ENCODE measurements at regions of chr11 and their contacts with region 1.

Region 1: DNA sequence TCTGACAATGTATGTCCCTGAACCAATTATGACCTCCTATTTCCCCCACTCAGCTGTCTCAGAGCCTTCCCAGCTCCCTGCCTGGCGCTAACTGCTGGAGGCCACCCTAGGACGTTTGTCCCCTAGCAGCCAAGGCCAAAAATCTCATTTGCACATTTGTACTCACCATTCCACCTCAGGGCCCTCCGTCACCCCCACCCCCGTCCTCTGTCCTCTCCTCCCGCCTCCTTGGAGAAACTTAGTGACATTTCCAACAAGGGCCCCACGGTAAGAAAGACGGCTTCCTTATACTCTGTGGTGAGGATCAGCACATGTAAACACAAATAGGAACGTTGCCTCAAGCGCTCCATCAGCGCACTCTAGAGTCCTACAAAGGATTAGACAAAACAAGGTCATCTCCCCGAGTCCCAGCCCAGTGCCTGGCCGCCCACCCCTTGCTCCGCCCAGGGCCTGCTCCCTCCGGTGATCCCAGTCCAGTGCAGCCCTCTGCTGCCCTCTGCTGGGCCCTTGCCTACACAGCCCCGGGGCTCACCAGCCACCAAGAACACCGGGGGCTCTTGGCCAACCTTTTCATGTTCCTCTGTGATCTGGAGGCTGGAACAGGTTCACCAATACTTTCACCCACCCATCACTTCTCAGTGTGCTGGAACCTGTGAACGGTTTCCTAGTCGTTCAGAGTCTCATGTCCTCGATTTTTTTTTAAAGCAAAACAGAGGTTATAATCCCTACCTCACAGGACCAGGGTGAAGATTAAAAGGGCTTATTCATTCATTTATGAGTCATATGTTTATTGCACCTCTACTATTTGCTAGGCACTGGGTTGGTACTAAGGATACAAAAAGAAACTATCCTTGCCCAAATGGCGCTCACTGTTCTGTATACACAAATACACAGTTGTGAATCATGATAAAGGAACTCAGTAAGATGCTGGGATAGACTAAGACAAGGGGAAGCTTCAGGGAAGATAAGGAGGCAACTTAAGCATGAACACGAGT is 15.3 kb upstream of the CTR9 start:
- DNase-seq: peak; percentile 96
- H3K4me3 ChIP-seq: peak overlapping the region; percentile 13
- H3K27ac ChIP-seq: peak overlapping the region; percentile 77
- H3K4me1 ChIP-seq: peaks cover 22% of the 10 kb centered on the region
- H3K27me3 ChIP-seq: no peaks in the 10 kb centered on the region
- CTCF ChIP-seq: peak; percentile 98

Region 2: GRCh38 chr11:9861860-9862725 is 873.7 kb before region 1 on chr11:
- CTCF ChIA-PET with region 1: no interaction called
- POLR2A ChIA-PET with region 1: no interaction called
- intact Hi-C with region 1: loop called (anchors 5 kb)
- DNase-seq: peak; percentile 81
- H3K4me3 ChIP-seq: no peak overlapping the region
- H3K27ac ChIP-seq: peak overlapping the region; percentile 49
- H3K4me1 ChIP-seq: peaks cover 49% of the 10 kb centered on the region
- H3K27me3 ChIP-seq: no peaks in the 10 kb centered on the region
- CTCF ChIP-seq: peak; percentile 86

Region 3: DNA sequence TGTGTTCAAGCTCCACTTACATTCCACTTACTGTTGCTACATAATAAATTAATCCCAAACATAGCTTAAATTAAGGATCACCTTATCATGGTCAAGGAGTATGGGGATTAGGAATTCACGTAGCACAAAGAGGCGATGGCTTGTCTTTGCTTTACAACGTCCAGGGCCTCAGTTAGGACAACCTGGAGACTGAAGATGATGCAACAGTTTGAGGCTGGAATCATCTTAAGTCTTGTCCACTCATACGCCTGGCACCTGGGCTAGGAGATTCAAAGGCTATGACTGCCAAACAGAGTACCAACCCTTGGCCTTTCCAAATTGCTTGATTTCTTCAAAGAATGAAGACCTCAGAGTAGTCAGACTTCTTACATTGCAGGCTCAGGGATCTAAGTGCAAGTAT is 590.8 kb before region 1 on chr11:
- CTCF ChIA-PET with region 1: no interaction called
- POLR2A ChIA-PET with region 1: no interaction called
- intact Hi-C with region 1: no loop called
- DNase-seq: no peak
- H3K4me3 ChIP-seq: no peak overlapping the region
- H3K27ac ChIP-seq: no peak overlapping the region
- H3K4me1 ChIP-seq: peaks cover 5% of the 10 kb centered on the region
- H3K27me3 ChIP-seq: no peaks in the 10 kb centered on the region
- CTCF ChIP-seq: no peak

Region 4: DNA sequence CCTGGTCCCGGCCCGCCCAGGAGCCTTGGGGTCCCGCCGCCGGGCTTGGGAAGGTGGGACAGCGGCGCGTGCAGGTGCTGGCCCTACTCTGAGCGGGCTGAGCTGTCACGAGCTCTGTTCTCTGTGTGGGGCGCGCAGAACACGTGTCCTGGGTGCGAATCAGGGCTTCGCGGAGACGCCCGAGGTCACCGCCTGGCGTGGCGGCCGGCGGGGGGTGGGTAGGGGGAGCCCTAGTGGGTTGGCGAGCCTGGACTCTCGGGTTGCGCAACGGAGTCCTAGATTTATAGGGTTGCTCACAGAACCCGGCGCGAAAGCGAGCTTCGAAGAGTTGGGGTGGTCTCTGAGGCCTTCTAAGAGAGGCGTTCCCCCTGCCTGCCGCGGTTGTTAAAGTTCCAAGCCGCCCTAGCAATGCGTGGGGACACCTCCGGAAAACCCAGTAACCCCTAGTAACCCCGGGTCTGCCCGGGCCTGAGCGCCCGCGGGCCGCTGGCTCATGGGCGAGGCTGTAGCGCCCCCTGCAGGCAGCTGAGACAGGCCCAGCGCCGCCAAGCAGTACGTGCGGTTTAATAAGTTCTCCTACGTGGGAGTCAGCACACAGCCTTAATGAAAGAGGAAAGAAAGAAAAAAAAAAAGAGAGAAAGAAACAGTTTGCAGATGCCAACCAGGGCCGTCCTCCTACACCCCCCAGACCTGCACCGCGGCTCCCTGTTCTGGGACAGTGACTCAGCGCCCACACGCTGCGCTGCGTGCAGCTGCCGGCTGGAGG is 428.2 kb before region 1 on chr11:
- CTCF ChIA-PET with region 1: no interaction called
- POLR2A ChIA-PET with region 1: no interaction called
- intact Hi-C with region 1: loop called (anchors 5 kb)
- DNase-seq: peak; percentile 86
- H3K4me3 ChIP-seq: peak overlapping the region; percentile 73
- H3K27ac ChIP-seq: peak overlapping the region; percentile 66
- H3K4me1 ChIP-seq: peaks cover 6% of the 10 kb centered on the region
- H3K27me3 ChIP-seq: no peaks in the 10 kb centered on the region
- CTCF ChIP-seq: peak; percentile 99

Region 5: DNA sequence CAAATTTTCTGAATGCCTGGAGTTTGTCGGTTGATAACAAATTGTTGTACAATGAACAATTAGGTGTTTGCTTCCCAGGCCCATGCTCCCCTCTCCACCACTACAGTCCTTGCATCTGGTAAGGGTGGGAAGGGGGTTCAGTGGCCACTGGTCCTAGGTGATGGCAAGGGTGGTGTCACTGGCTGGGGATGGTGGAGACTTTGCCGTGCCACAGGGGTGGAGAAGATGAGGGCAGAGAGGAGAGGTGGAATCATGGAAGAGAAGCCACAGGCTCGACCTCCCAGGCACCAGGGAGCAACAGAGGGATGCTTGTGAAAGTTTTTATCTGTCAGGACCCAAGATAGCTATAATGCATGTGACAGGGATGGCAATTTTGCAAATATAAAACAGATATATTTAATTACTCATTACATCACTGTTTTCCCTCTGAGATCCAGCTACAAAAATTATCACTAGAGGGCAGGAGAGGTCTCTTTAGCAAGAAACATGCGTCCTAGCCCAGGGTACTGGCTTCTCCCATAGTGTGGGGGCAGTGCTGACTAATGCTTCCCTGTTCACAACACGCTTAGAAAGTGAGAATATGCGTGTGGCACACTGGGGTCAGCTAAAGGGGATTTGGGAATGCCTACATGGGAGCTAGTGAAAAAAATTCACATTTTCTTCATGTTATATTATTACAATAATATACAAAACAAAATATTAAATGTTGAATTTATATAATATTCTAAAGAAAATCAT is 329.8 kb before region 1 on chr11:
- CTCF ChIA-PET with region 1: interaction called, 10 read pairs
- POLR2A ChIA-PET with region 1: no interaction called
- intact Hi-C with region 1: loop called (anchors 1 kb)
- DNase-seq: peak; percentile 94
- H3K4me3 ChIP-seq: no peak overlapping the region
- H3K27ac ChIP-seq: peak overlapping the region; percentile 38
- H3K4me1 ChIP-seq: peaks cover 21% of the 10 kb centered on the region
- H3K27me3 ChIP-seq: no peaks in the 10 kb centered on the region
- CTCF ChIP-seq: peak; percentile 75

Region 6: DNA sequence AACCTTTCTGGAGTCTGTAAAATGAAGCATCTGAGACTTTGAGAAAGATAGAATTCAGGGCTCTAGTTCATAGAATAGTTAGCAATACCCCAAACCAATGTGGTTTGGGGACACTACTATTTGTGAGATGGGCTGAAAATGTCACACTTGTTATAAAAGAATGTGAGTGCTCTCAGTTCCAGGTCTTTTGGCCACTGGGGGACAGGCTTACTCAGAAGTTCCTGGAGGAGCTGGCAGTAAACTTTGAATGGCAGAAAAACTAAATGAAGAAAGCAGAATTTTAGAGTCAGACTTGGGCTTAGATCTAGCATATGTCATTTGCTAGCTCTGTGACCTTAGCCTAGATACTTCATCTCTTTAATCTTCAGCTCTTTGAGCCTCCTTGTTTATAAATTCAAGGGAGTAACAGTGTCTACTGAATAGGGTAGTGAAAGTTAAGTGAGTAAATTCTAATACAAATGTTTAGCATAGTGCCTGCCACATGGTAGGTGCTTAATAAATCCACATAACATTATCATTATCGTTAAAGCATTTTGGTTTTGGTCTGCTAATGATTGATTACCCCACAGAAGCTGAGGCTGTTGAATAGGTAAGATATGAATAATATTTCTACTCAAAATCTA is 171.0 kb before region 1 on chr11:
- CTCF ChIA-PET with region 1: no interaction called
- POLR2A ChIA-PET with region 1: no interaction called
- intact Hi-C with region 1: loop called (anchors 2 kb)
- DNase-seq: peak; percentile 46
- H3K4me3 ChIP-seq: no peak overlapping the region
- H3K27ac ChIP-seq: peak overlapping the region; percentile 50
- H3K4me1 ChIP-seq: peaks cover 26% of the 10 kb centered on the region
- H3K27me3 ChIP-seq: no peaks in the 10 kb centered on the region
- CTCF ChIP-seq: peak; percentile 53